AG04449 (cell line): ENCODE measurements at regions of chr12 and their contacts with region 1.

Region 1: DNA sequence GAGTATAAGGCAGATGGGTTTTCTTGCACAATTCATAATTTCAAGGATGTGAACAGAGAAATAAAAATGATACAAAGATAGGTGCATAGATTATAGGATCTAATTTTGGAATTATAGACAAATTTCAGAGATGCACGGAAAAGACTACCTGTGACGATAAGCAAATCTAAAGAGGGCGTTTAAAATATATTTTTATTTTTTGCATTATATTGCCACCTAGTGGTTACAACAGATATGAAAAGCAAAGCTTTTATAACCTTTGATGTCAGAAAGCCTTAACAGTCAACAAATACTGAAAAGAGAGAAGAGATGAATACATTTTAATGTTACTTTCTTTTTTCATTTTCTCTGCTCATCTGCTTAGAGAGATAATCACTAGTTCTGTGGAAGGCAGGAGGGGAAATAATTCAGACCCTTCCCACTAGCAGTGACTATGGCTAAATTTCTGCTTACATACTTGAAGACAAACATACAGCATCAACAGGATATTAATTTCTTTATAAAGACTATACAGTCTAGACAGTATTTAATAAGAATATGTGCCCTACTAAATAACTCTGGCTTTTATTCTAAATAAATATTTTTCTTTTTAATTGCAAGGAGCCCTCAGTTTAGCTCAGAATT is 46.3 kb downstream of the NTS start:
- DNase-seq: no peak
- H3K4me3 ChIP-seq: no peak overlapping the region
- CTCF ChIP-seq: peak; percentile 4

Region 2: DNA sequence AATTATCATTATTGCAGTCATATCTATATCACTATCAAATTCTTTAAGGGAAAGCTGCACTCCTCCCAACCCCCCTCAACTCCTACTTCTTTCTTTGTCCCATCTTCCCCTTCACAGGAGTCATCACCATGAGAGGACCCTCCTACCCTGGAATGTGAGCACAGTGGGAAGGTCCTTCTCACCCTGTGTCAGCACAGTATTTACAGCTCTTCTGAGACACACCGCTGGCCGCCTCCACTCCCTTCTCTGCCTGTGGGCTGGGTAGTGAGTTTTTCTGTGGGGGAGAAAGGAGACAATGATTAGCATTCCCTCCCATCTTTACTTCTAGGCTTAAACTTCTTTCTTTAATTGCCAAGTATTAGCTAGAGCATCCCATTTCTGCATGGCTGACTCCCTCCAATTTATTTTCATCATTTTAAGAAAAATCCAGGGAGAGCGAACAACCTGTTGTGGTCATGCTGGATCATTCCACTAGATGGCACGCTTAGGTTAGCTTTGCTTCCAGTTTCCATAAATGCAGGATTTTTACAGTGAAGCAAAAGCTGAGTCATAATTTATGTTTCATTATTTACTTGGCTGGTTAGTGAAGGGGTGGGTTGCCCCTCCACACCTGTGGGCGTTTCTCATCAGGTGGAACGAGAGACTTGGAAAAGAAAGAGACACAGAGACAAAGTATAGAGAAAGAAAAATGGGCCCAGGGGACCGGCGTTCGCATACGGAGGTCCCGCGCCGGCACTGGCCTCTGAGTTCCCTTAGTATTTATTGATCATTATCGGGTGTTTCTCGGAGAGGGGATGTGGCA is 451.9 kb before region 1 on chr12:
- CTCF ChIA-PET with region 1: interaction called, 38 read pairs
- POLR2A ChIA-PET with region 1: no interaction called
- DNase-seq: peak; percentile 28
- H3K4me3 ChIP-seq: peak overlapping the region; percentile 35
- CTCF ChIP-seq: peak; percentile 77

Region 3: DNA sequence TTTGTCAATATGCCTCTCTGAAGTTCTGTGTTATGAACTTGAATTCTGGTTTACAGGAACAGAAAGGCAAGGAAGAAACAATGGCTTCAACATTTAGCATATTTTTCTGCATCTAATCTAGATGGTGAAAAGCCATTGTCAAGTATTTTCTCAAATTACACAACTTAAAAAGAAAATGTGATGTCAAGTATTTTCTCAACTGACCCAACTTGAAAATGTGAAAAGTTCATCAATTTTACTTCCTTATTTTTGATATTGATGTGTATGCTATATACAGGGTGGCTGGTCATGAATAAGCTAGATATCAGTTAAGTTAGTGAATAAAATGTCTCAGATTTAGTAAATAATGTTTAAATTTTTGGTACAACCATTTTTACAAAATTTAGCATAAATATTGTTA is 443.7 kb before region 1 on chr12:
- CTCF ChIA-PET with region 1: interaction called, 10 read pairs
- POLR2A ChIA-PET with region 1: no interaction called
- DNase-seq: no peak
- H3K4me3 ChIP-seq: no peak overlapping the region
- CTCF ChIP-seq: no peak

Region 4: DNA sequence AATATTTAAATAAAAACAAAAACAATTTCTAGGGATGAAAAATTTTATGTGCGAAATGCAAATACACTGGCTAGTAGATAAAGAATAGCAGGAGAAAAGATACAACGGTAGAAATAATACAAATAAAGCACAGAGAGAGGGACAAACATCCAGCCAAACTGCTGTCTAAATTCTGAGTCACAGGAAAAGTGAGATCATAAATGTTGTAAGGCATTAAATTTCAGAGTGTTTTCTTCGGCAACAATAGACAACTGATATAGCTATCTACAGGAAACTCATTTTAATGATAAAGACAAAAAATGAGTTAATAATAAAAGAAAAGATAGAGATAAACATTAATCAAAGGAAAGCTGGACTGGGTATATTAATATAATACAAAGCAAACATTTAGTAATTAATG is 75.8 kb after region 1 on chr12:
- CTCF ChIA-PET with region 1: no interaction called
- POLR2A ChIA-PET with region 1: no interaction called
- DNase-seq: no peak
- H3K4me3 ChIP-seq: no peak overlapping the region
- CTCF ChIP-seq: no peak

Region 5: DNA sequence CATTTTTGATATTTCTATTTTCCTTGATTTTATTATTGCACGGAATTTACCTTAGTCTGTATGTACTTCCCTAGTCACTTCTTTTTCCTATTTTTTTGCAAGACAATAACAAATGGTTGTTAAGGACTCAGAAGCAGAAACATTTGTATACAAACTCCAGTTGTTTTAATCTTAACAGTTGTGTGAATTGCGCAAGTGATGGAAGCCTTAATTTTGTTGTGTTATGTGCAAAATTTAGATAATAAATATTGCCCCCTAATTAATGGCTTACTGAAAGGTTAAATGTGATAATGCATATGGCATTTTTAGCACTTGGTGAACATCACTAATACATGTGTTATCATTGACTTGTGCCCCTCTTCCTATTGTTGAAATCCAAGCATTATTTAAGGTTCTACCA is 253.8 kb after region 1 on chr12:
- CTCF ChIA-PET with region 1: no interaction called
- POLR2A ChIA-PET with region 1: no interaction called
- DNase-seq: no peak
- H3K4me3 ChIP-seq: no peak overlapping the region
- CTCF ChIP-seq: no peak